Activated naive CD4-positive, alpha-beta T cell treated with anti-CD3 and anti-CD28 coated beads for 36 hours (primary cell): ENCODE measurements at regions of chr11 and their contacts with region 1.

Region 1: GRCh38 chr11:133134314-133135173 is 397.8 kb downstream of the OPCML start:
- DNase-seq: peak; percentile 56
- H3K4me3 Mint-ChIP-seq: no peak overlapping the region
- H3K27ac Mint-ChIP-seq: no peak overlapping the region
- H3K4me1 Mint-ChIP-seq: no peaks in the 10 kb centered on the region
- H3K27me3 Mint-ChIP-seq: peaks cover 11% of the 10 kb centered on the region

Region 2: GRCh38 chr11:132874638-132875037 is 259.9 kb before region 1 on chr11:
- CTCF ChIA-PET with region 1: no interaction called
- intact Hi-C with region 1: no loop called
- DNase-seq: no peak
- H3K4me3 Mint-ChIP-seq: no peak overlapping the region
- H3K27ac Mint-ChIP-seq: no peak overlapping the region
- H3K4me1 Mint-ChIP-seq: no peaks in the 10 kb centered on the region
- H3K27me3 Mint-ChIP-seq: no peaks in the 10 kb centered on the region

Region 3: DNA sequence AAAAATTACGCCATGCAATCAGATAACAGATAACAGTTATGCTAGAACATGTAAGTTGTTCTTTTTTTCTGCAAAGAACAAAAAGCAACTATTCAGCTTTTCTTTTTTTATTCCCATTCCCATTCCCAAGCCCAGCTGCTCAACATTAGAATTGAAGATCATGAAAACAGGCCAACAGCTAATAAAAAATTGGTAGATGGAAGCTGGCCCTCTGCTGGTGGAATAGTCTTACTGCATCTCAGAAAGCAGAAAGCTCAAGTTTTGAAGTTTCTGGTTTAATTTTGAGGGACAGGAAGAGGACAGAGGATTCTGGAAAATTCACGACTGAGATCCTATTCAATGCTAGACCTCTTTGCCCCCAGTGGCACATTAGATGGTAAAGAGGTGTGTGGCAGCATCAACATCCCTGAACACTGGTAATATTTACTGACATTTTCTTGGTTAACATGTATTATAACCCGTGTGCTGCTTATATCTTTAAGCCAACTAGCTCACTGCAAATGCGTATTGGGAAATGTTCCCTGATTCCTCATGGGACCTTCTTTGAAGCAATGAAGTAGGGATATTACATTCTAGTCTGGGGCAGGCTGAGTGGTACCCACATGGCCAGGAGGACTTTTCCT is 193.4 kb before region 1 on chr11:
- CTCF ChIA-PET with region 1: no interaction called
- intact Hi-C with region 1: no loop called
- DNase-seq: peak; percentile 24
- H3K4me3 Mint-ChIP-seq: no peak overlapping the region
- H3K27ac Mint-ChIP-seq: no peak overlapping the region
- H3K4me1 Mint-ChIP-seq: peaks cover 3% of the 10 kb centered on the region
- H3K27me3 Mint-ChIP-seq: peaks cover 35% of the 10 kb centered on the region

Region 4: DNA sequence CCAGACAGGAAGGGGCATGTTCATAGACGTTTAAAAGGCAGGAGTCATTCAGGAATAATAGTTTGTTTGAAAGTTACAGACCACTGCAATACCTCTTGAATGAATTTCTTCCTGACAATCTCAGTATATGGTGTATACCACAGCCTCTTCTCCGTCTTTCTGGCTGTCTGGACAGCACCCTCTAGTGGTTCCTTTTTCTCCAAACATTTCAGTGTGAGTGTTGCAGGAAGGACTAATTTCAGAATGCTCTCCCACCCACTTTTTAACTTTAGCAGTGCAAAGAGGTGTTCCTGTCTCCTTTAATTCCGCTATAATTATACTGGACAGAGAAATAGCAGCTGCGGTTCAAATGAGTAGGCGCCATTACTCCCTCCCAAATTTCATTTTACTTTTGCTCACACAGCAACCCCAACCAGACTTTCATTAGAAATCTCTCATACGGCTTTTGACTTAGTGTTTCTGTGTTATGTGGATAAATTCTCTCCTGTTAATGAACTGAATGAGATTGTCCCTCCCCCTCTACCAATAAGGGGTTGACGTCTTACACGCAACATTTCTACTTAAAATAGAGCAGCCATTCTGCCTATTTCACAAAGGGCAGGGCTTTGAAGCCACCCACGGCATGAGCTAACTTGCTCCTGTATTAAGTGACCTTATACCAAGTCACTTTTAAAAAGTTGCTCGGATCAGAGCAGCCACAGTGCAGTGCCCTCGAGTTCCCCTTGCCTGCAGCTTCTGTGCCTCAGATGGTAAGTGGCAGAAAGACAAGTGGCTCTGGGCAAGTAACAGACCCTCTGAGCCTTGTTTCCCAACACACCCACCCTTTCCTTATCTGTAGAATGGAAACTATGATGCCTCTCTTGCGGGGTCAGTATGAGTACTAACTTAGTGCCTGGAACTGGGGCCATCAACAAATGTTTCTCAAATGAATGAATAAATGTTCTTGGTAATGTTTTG is 29.2 kb after region 1 on chr11:
- CTCF ChIA-PET with region 1: no interaction called
- intact Hi-C with region 1: loop called (anchors 1 kb)
- DNase-seq: peak; percentile 5
- H3K4me3 Mint-ChIP-seq: no peak overlapping the region
- H3K27ac Mint-ChIP-seq: no peak overlapping the region
- H3K4me1 Mint-ChIP-seq: no peaks in the 10 kb centered on the region
- H3K27me3 Mint-ChIP-seq: peaks cover 5% of the 10 kb centered on the region

Region 5: DNA sequence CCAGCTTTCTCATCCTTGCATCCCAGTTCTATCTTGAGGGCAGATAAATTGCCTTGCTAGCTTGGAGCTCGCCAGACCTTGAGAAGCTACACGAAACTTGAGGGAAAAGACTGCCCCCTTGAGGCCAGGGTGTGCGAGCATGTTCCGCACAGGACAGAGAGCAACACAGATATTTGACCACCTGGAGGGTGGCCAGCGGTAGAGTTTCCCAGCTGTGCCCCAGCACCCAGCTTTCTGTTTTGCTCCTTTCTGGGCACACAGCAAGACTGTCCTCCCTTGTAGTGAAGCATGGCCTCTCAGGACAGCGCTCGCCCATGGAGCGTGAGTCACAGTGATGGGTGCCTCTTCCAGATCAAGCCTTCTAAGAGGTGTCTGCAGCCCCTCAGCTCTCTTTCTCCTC is 687.2 kb after region 1 on chr11:
- CTCF ChIA-PET with region 1: interaction called, 3 read pairs
- intact Hi-C with region 1: loop called (anchors 2 kb)
- DNase-seq: peak; percentile 58
- H3K4me3 Mint-ChIP-seq: no peak overlapping the region
- H3K27ac Mint-ChIP-seq: no peak overlapping the region
- H3K4me1 Mint-ChIP-seq: no peaks in the 10 kb centered on the region
- H3K27me3 Mint-ChIP-seq: peaks cover 2% of the 10 kb centered on the region

Region 6: GRCh38 chr11:133834682-133835592 is 700.4 kb after region 1 on chr11:
- CTCF ChIA-PET with region 1: interaction called, 13 read pairs
- intact Hi-C with region 1: loop called (anchors 1 kb)
- DNase-seq: peak; percentile 73
- H3K4me3 Mint-ChIP-seq: no peak overlapping the region
- H3K27ac Mint-ChIP-seq: no peak overlapping the region
- H3K4me1 Mint-ChIP-seq: peaks cover 4% of the 10 kb centered on the region
- H3K27me3 Mint-ChIP-seq: peaks cover 9% of the 10 kb centered on the region